Posterior vena cava (tissue), 2 donors: ENCODE measurements at regions of chr12 and their contacts with region 1.

Region 1: GRCh38 chr12:10771132-10771733 is 31.2 kb downstream of the TAS2R7 start:
- DNase-seq: no peak

Region 2: DNA sequence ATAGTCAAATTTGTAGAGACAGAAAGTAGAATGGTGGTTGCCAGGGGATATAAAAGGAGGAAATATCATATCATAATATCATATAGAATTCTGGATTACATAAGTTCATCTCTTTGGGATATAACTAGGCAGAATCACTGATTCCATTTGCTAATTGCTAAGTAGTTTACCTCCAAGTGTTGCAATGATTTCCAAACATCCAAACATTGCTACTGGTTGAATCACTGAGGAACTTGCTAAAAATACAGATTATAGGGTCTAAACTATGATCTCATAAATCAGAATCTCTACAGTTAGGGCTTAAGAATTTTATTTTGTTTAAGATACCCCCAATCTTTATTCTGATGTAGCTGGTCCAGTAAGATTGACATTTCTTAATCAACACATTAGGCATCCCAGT is 431.6 kb after region 1 on chr12:
- intact Hi-C with region 1: loop called (anchors 5 to 10 kb)
- DNase-seq: no peak

Region 3: GRCh38 chr12:11228296-11228879 is 457.2 kb after region 1 on chr12:
- intact Hi-C with region 1: no loop called
- DNase-seq: no peak

Region 4: DNA sequence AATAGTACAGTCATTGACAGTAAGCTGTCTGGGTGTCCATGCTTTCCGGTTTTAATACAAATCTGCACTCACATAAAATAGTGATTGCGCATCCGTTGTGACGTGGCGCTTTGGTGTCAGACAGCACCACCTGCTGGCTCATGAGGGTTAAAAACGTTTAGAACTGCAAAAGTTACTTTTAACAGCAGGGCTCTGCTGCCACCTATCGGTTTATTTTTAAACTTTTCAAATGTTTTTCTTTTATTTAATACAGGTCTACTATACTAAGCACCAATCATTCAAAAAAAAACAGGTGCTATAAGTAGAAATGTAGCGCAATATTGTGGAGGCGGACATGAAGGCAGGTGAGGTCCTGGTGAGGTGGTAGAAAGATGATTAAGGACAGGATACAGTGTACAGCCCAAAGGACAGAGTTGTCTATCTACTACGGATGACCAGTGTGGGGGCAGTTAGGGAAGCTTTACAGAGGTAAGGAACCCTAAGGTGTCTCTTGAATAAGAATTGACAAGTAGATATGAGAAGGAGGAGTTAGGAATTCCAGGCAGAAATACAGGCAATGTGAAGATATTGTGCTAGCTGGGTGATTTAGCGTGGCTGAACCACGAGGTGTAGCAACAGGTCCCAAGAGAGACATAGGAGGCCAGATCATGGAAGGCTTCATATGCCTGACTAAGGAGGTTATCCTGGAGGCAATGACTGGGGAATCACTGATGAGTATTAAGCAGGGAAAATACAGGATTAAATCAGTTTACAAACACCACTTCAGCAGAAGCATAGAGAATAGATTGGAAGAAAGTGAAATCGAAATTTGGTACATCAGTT is 715.6 kb after region 1 on chr12:
- intact Hi-C with region 1: loop called (anchors 5 to 10 kb)
- DNase-seq: peak; percentile 92